ENCODE measurements at regions of chr3 and their contacts with region 1.

Region 1: DNA sequence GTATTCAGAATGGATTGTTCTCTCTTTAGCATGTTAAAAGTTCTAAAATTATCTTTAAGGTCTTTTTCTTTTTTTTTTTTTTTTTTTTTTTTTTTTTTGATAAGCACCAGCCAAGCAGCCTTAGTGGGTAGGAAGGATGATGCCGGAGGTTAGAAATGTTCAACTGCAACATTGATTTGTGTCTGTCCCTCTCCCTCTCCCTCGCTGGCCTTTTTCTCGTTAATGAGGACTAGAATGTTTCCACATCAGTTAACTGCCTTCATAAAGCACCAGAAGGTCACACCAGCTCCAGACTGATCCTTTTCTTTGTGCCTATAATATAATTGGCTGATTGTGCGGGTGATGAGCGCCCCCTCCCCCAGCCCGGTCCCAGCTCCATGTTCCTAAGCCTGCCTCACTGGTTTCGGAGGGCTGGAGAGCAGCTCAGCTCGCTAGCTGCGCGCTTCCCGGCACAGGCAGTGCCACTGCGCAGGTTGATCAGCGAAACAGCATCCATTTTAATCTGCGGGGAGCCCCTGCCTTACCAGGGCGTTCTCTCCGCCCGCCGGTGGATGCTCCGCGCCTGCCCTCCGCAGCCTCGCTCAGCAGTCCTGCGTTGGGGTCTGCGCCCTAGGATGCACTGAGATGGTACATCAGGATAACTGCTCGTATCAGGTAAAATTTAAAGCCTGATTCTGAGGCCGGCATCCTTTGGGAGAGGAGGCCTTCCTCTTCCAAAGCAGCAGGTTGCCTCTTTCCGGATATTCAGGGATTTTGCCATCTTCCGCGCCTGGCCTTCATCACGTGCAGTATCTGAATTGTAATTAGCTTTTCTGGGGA is 148.9 kb upstream of the IL12A start:
- DNase-seq: peak in 4 of 5 donors; percentile 35 to 69 (median 44)
- ATAC-seq: peak; percentile 58 to 78 (median 64)
- H3K4me3 ChIP-seq: peak within 1 kb of the TSS; percentile 9 to 60 (median 48)
- H3K27ac ChIP-seq: peak within 1 kb of the TSS; percentile 44 to 84 (median 75)
- H3K4me1 ChIP-seq: peaks cover 9 to 72% (median 46%) of the 10 kb centered on the region in 12 donors
- H3K27me3 ChIP-seq: no peaks in the 10 kb centered on the region
- CTCF ChIP-seq: no peak
- POLR2A ChIP-seq: no peak

Region 2: DNA sequence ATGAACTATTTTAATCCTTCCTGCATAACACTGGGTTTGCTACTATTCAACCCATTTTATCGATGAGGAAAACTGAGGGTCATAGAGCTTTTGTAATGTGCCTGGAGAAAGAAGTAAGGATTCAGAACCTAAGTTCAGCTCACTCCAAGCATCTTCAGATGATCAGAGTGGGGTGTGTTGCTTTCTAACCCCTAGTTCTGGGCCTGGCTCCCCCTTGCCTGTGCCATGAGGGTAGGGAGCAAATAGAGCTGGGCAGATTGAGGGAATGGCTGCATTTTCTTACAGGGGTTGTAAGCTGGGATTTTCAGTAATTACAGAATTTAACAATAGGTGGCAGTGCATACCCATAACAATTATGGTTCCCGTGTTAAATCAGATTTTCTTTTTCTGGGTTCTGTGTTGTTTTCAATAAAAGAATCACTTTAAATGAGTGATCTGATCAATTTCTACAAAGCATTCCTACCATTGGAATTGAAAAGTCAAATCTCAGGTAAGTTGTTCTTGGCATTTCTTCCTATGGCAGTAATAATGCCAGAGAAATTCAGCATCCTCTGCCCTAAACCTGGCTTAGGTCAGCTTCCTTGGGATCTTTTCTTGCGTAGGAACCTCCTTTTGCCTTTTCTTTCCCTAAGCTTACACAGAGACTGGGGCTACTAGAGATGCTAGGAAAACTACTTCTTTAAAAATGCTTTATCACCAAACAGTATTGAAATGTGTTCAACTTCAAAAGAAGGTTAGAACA is 45.1 kb after region 1 on chr3:
- intact Hi-C with region 1: loop called in 5 of 10 experiments (anchors 5 to 10 kb)
- DNase-seq: no peak
- ATAC-seq: no peak
- H3K4me3 ChIP-seq: no peak overlapping the region
- H3K27ac ChIP-seq: peak overlapping the region in 6 of 12 donors; percentile 11 to 44 (median 34)
- H3K4me1 ChIP-seq: peaks cover 7 to 84% (median 62%) of the 10 kb centered on the region in 12 donors
- H3K27me3 ChIP-seq: no peaks in the 10 kb centered on the region
- CTCF ChIP-seq: peak; percentile 42 to 73 (median 62)
- POLR2A ChIP-seq: no peak

Region 3: DNA sequence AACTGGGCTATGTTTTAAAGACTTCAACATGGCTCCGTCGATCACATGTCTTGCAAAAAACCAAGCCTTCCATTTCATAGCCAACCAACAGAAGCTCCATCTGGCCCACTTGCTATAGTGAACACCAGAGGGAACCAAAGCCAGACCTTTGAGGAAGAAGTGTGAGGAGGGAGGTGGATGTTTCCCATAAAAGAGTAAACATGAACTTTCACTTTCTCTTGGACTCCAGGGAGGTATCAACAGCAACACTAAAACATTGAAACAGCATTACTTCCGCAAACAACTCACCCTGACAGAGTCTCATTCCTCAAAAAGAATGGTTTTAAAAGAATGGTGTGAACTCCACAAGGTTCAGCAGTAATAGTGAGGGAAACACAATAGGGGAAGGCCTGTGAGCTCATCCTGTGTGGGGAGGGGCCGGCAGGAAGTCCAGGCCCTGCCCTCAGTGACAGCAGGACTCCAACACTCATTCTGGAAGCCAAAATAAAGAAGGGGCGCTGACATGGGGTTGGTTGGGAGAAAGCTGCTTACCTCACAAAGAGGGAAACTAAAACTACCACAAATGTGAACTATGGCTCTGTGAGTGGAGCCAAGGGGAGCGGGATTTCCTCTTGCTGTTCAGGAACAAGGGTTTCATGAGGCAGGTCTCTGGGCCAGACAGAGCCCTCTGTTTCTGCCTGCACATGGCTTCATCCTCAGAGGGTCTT is 89.8 kb after region 1 on chr3:
- intact Hi-C with region 1: no loop called
- DNase-seq: peak in 3 of 5 donors; percentile 32 to 57 (median 49)
- ATAC-seq: peak; percentile 56 to 94 (median 78)
- H3K4me3 ChIP-seq: no peak overlapping the region
- H3K27ac ChIP-seq: peak overlapping the region; percentile 27 to 84 (median 52)
- H3K4me1 ChIP-seq: peaks cover 0 to 26% (median 9%) of the 10 kb centered on the region in 12 donors
- H3K27me3 ChIP-seq: no peaks in the 10 kb centered on the region
- CTCF ChIP-seq: peak in 11 of 12 donors; percentile 18 to 49 (median 30)
- POLR2A ChIP-seq: no peak

Region 4: DNA sequence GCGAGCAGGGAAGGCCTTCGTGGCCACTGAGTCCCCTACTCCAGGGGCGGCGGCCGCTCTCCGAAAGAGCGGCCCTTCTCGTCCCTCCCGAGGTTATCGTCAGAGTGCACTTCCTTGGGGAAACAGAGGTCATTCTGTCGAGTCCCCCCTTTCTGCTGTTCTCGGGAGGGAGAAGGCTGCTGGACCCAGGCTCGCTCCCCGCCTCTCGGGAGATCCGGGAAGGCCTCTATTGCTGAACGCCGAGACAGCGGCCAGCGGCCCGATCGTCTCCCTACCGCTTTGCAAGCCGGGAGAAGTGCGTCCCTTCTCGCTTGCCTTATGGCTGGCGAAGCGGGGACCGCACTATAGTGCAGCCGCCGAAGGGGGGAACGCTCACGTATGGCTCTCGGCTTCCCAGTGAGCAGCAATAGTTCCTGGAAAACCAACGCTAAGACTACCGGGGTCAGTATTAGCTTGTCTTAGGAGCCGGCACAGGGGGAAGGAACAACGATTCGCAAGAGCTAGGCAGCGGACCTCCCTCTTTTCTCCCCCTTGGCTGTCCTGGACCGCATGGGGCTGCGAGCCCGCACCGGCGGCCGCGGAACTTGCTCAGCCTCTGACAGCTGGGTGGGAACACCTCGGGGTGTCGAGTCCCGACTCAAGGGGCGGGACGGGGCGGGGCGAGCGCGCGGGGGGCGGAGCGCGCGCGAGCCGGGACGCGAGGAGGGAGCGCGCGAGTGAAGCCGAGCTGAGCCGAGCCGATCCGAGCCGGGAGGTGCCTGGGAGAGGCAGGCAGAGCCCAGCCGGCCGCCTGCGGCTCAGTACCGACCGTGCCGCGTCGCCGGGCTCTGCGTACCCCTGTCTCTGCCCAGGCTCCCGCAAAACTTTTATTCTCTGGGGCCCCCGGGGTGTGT is 915.3 kb after region 1 on chr3:
- intact Hi-C with region 1: no loop called
- DNase-seq: peak; percentile 94 to 97 (median 95)
- ATAC-seq: peak; percentile 93 to 96 (median 94)
- H3K4me3 ChIP-seq: peak overlapping the region; percentile 66 to 93 (median 82)
- H3K27ac ChIP-seq: peak overlapping the region; percentile 87 to 99 (median 96)
- H3K4me1 ChIP-seq: peaks cover 0 to 38% (median 13%) of the 10 kb centered on the region in 12 donors
- H3K27me3 ChIP-seq: no peaks in the 10 kb centered on the region
- CTCF ChIP-seq: no peak
- POLR2A ChIP-seq: peak; percentile 49 to 92